Sigmoid colon (tissue), 7 donors: ENCODE measurements at regions of chr13 and their contacts with region 1.

Region 1: GRCh38 chr13:45194081-45194939 is 6.5 kb downstream of the KCTD4 start:
- DNase-seq: peak; percentile 81
- H3K4me3 ChIP-seq: peak overlapping the region in 2 of 4 donors; percentile 16 to 21
- H3K27ac ChIP-seq: peak overlapping the region in 3 of 4 donors; percentile 18 to 46 (median 29)
- H3K4me1 ChIP-seq: peaks cover 0 to 67% (median 41%) of the 10 kb centered on the region in 4 donors
- H3K27me3 ChIP-seq: no peaks in the 10 kb centered on the region
- CTCF ChIP-seq: peak; percentile 46 to 57 (median 55)
- EP300 ChIP-seq: no peak
- POLR2A ChIP-seq: no peak

Region 2: GRCh38 chr13:45055198-45055901 is 139.0 kb before region 1 on chr13:
- intact Hi-C with region 1: loop called (anchors 5 kb)
- DNase-seq: peak; percentile 66
- H3K4me3 ChIP-seq: no peak overlapping the region
- H3K27ac ChIP-seq: peak overlapping the region; percentile 52 to 79 (median 74)
- H3K4me1 ChIP-seq: peaks cover 0 to 30% (median 22%) of the 10 kb centered on the region in 4 donors
- H3K27me3 ChIP-seq: no peaks in the 10 kb centered on the region
- CTCF ChIP-seq: no peak
- EP300 ChIP-seq: no peak
- POLR2A ChIP-seq: no peak

Region 3: DNA sequence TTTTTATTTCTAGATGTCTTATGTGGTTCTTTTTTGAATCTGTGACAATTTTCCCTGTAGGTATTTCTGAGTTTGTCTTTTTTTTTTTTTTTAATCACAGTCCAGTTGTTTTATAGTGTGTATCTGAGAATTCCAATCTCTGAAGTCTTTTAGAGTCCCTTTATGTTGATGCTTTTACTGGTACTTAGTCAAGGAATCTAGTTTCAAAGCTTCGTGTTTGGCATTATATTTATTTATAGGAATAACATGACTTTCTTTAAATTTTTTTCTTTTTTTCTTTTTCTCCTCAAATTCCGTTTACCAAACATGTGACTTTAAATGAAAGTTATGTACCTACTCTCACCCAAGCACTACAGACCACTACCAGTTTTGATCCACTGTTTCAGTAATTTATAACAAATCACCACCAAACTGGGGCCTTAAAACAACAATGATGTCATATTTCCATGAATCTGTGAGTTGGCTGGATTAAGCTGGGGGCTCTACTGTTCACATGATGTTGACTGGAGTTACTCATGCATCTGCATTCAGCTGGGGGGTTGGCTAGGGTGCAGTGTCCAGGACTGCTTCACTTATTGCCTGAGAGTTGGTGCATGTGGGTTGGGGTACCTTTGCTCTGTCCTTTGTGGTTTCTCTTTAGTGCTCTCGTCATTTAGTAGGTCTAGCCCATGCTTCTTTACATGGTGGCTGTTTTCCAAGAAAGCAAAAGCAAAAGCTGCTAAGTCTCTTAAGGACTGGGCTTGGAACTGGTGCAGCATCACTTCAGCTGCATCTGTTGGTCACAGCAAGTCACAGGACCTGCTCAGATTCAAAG is 15.8 kb before region 1 on chr13:
- intact Hi-C with region 1: no loop called
- DNase-seq: no peak
- H3K4me3 ChIP-seq: no peak overlapping the region
- H3K27ac ChIP-seq: peak overlapping the region in 1 of 4 donors; percentile 7
- H3K4me1 ChIP-seq: peaks cover 0 to 31% (median 19%) of the 10 kb centered on the region in 4 donors
- H3K27me3 ChIP-seq: no peaks in the 10 kb centered on the region
- CTCF ChIP-seq: no peak
- EP300 ChIP-seq: no peak
- POLR2A ChIP-seq: no peak